Activated CD8-positive, alpha-beta memory T cell treated with anti-CD3 and anti-CD28 coated beads, Interleukin-2, amount 10 ng/mL, durations not matched to agents 7 days and 5 days (primary cell): ENCODE measurements at regions of chr18 and their contacts with region 1.

Region 1: GRCh38 chr18:77067291-77068061 is 65.1 kb downstream of the MBP start:
- DNase-seq: peak; percentile 91
- ATAC-seq: peak; percentile 67
- H3K4me3 Mint-ChIP-seq: peak overlapping the region; percentile 60
- H3K27ac Mint-ChIP-seq: peak overlapping the region; percentile 100
- H3K4me1 Mint-ChIP-seq: peaks cover 100% of the 10 kb centered on the region
- H3K27me3 Mint-ChIP-seq: no peaks in the 10 kb centered on the region

Region 2: DNA sequence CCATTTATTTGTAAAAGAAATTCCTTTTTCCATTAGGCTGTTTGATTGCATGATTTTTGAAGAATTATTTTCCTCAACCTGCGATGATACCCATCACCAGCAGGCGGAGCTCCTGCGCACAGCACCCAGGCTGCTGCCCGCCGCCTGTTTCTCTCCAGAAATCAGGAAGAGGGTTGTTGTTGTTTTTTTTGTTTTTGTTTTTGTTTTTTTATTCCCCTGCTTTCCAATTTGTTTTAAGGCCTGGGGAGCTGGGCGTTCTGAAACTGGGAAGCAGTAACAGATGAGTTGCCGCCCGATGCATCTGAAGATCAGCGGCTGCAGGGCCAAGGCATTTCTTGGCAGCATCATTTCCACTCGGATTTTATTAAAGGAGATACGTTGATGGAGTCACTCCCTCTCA is 66.9 kb before region 1 on chr18:
- CTCF ChIA-PET with region 1: interaction called, 33 read pairs
- DNase-seq: peak; percentile 60
- ATAC-seq: no peak
- H3K4me3 Mint-ChIP-seq: no peak overlapping the region
- H3K27ac Mint-ChIP-seq: peak overlapping the region; percentile 42
- H3K4me1 Mint-ChIP-seq: peaks cover 37% of the 10 kb centered on the region
- H3K27me3 Mint-ChIP-seq: no peaks in the 10 kb centered on the region

Region 3: GRCh38 chr18:77084688-77085035 is 17.2 kb after region 1 on chr18:
- CTCF ChIA-PET with region 1: interaction called, 13 read pairs
- DNase-seq: no peak
- ATAC-seq: no peak
- H3K4me3 Mint-ChIP-seq: peak overlapping the region; percentile 8
- H3K27ac Mint-ChIP-seq: peak overlapping the region; percentile 84
- H3K4me1 Mint-ChIP-seq: peaks cover 67% of the 10 kb centered on the region
- H3K27me3 Mint-ChIP-seq: no peaks in the 10 kb centered on the region

Region 4: GRCh38 chr18:77124452-77124922 is 57.0 kb after region 1 on chr18:
- CTCF ChIA-PET with region 1: interaction called, 12 read pairs
- DNase-seq: peak; percentile 86
- ATAC-seq: peak; percentile 85
- H3K4me3 Mint-ChIP-seq: peak overlapping the region; percentile 69
- H3K27ac Mint-ChIP-seq: peak overlapping the region; percentile 79
- H3K4me1 Mint-ChIP-seq: peaks cover 86% of the 10 kb centered on the region
- H3K27me3 Mint-ChIP-seq: no peaks in the 10 kb centered on the region

Region 5: DNA sequence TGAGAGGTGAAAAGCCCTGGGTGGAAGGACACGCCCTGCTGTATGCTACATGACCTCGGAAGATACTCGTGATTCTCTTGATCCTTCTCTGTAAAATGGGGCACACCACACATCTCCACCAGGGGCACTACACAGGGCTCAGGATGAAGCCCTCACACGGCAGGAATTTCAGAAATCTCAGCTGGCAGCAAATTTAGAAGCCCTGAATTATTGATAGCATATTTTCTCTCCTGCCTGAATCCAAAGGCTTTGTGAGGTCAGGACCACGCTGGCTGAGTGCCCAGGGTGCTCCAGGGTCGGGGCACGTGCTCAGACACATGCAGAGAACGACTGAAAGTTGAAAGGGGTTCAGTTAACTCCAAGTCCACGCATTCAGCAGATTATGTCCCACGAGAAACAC is 140.1 kb after region 1 on chr18:
- CTCF ChIA-PET with region 1: interaction called, 18 read pairs
- DNase-seq: peak; percentile 56
- ATAC-seq: peak; percentile 50
- H3K4me3 Mint-ChIP-seq: no peak overlapping the region
- H3K27ac Mint-ChIP-seq: no peak overlapping the region
- H3K4me1 Mint-ChIP-seq: peaks cover 47% of the 10 kb centered on the region
- H3K27me3 Mint-ChIP-seq: no peaks in the 10 kb centered on the region